Heart right ventricle (tissue), 16 donors: ENCODE measurements at regions of chr7 and their contacts with region 1.

Region 1: GRCh38 chr7:156034397-156034796 is 222.1 kb upstream of the SHH start:
- DNase-seq: no peak
- ATAC-seq: no peak
- H3K4me3 ChIP-seq: peak overlapping the region in 1 of 10 donors; percentile 16
- H3K27ac ChIP-seq: no peak overlapping the region
- H3K4me1 ChIP-seq: no peaks in the 10 kb centered on the region
- H3K27me3 ChIP-seq: peaks cover 0 to 42% (median 28%) of the 10 kb centered on the region in 7 donors
- CTCF ChIP-seq: no peak

Region 2: DNA sequence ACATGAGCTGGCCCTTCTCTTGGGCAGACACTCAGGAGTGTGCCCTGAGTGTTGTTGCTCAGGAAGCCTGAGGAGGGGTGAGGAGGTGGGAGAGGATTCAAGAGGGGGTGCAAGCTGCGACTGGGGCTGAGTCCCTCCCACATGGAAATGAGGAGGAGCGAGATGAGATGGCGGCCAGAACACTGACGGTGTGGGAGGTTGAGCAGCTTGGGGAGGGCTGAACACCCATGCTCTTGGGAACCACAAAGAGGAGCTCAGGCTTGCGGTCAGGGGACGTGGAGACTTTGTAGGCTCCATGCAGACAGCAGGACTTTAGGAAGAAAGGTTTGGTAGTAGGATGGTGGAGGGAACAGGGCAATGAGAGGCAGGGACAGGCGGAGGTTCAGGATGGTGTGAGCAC is 58.9 kb before region 1 on chr7:
- intact Hi-C with region 1: loop called in 1 of 10 experiments (anchors 10 kb)
- DNase-seq: no peak
- ATAC-seq: no peak
- H3K4me3 ChIP-seq: no peak overlapping the region
- H3K27ac ChIP-seq: no peak overlapping the region
- H3K4me1 ChIP-seq: no peaks in the 10 kb centered on the region
- H3K27me3 ChIP-seq: peaks cover 0 to 37% (median 17%) of the 10 kb centered on the region in 7 donors
- CTCF ChIP-seq: no peak

Region 3: DNA sequence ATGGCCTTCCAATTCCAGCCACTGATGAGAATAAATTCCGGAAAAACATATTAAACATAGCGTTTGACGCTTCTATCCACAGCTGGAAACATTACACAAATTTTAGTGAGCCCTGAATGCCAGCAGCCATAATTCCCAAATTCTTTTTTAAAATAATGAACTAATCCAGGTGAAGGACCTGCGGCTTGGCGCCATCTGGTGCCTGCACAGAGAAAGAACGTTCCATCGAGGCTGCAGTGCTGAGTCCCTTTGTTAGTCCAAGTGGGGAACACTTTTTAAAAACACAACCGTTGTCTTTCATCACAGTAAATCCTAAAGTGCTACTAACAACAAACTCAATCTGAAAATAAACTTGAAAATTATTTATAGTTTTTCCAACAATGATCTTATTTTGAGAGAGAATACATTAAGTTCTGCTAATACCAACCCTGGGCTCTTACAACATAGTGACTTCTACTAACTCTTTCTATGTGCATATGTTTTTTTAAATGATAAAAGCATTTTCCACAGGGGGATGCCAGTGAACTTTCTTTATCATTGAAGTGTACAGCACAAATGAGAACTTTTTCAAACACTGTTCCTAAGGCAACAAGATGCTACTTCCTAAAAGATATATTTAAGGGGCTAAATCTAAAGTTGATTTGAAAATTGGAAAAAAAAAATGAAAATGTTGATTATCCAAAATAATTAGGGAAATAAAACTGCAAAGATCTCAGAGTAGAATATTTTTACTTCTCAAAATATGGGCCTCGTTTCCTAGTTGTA is 439.3 kb after region 1 on chr7:
- intact Hi-C with region 1: no loop called
- DNase-seq: no peak
- ATAC-seq: no peak
- H3K4me3 ChIP-seq: no peak overlapping the region
- H3K27ac ChIP-seq: no peak overlapping the region
- H3K4me1 ChIP-seq: no peaks in the 10 kb centered on the region
- H3K27me3 ChIP-seq: peaks cover 0 to 43% (median 14%) of the 10 kb centered on the region in 7 donors
- CTCF ChIP-seq: peak; percentile 21 to 77 (median 68)